ENCODE measurements at regions of chr10 and their contacts with region 1.

Region 1: GRCh38 chr10:49592726-49593563 is 17.2 kb upstream of the SLC18A3 start:
- DNase-seq: peak; percentile 82 to 87
- H3K4me3 ChIP-seq: no peak overlapping the region
- H3K4me3 Mint-ChIP-seq: no peak overlapping the region
- H3K27ac Mint-ChIP-seq: no peak overlapping the region
- H3K4me1 ChIP-seq: no peaks in the 10 kb centered on the region
- H3K4me1 Mint-ChIP-seq: no peaks in the 10 kb centered on the region
- H3K27me3 ChIP-seq: no peaks in the 10 kb centered on the region
- H3K27me3 Mint-ChIP-seq: no peaks in the 10 kb centered on the region
- CTCF ChIP-seq: peak; percentile 97 to 99

Region 2: DNA sequence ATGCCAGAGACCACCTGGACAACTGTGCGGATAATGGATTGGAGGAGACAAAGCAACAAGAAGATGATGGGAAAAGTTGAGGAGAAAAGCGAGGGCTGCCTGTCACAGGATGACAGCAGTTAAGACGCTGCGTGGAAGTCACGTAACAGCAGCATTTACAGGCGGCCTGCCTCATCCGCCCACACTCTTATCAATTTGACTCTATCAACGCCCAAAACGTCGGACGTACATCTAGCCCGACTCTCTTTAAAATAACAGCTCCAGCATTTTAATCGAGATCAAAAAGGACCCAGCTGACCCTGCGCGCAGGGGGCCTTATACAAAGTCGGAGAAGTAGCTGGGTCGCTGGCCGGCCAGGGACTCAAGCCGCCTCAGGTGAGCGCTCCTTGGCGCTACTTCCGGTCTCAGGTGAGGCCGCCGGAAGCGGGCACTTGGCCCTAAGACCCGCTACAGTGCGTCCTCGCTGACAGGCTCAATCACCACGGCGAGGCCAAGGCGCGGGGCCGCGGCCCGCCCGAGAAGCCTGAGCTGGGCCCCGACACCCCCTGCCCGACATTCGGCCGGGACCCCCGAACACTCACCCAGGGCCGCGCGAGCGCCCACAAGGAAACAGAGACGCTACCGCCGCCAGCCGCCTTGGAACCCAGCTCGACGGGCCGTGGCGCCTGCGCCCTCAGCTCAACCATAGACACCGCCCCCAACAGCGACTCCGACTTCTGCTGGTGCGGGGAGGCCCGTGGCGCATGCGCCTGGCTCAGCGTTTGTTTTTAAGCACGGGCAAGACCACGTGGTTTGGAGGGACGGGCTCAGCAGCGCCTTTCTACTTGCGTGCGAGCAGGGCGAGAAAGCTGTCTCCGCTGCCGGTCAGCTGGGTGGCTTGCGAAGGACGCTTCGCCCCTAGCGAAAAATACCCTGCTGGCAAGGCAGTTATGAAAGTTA is 54.3 kb before region 1 on chr10 and contains the start of gene ERCC6:
- CTCF ChIA-PET with region 1: interaction called, 4 read pairs
- POLR2A ChIA-PET with region 1: no interaction called
- intact Hi-C with region 1: loop called (anchors 2 kb)
- DNase-seq: peak; percentile 99
- H3K4me3 ChIP-seq: peak within 1 kb of the TSS; percentile 54
- H3K4me3 Mint-ChIP-seq: peak within 1 kb of the TSS; percentile 93
- H3K27ac Mint-ChIP-seq: peak within 1 kb of the TSS; percentile 96
- H3K4me1 ChIP-seq: no peaks in the 10 kb centered on the region
- H3K4me1 Mint-ChIP-seq: no peaks in the 10 kb centered on the region
- H3K27me3 ChIP-seq: no peaks in the 10 kb centered on the region
- H3K27me3 Mint-ChIP-seq: peaks cover 1% of the 10 kb centered on the region
- CTCF ChIP-seq: peak in 1 of 2 experiments; percentile 24
- total RNA-seq, gene ERCC6: 30.2 and 32.0 TPM in 2 replicates

Region 3: DNA sequence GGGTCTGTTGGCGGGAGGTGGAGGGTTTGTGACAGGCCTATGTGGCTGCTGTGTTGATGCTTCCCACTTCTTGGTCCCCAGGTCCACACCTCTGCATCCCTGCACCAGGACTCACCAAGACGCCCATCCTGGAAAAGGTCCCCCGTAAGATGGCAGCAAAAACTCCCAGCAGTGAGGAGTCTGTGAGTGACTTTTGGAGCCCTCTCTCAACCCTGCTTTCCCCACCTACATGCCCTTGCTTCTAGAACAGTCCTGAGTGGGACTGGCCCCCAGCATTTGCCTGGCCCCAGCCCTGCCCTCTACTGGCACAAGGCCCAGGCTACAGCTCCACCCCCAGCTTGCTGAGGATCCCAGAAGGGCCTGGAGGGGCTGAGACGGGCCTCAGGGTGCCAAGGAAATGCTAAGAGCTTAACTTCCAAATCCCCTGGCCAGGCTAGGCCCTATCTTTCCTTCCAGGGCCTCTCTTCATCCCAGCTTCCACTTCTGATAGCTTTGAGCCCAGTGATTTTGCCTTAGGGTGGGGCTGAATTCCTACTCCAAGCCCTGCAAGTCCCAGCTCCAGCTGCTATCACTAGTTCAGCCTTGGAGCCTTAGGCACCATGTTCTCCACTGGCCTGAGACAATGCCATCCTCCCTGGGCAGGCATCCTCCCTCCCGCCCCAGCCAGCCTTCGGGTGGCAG is 23.6 kb after region 1 on chr10:
- CTCF ChIA-PET with region 1: no interaction called
- POLR2A ChIA-PET with region 1: no interaction called
- intact Hi-C with region 1: loop called (anchors 2 kb)
- DNase-seq: peak in 1 of 2 experiments; percentile 40
- H3K4me3 ChIP-seq: no peak overlapping the region
- H3K4me3 Mint-ChIP-seq: no peak overlapping the region
- H3K27ac Mint-ChIP-seq: no peak overlapping the region
- H3K4me1 ChIP-seq: no peaks in the 10 kb centered on the region
- H3K4me1 Mint-ChIP-seq: no peaks in the 10 kb centered on the region
- H3K27me3 ChIP-seq: no peaks in the 10 kb centered on the region; the same call in 1 of the 2 replicates
- H3K27me3 Mint-ChIP-seq: peaks cover 28% of the 10 kb centered on the region
- CTCF ChIP-seq: peak in 1 of 2 experiments; percentile 22

Region 4: GRCh38 chr10:49761789-49762565 is 169.0 kb after region 1 on chr10 and contains the start of gene OGDHL:
- CTCF ChIA-PET with region 1: interaction called, 3 read pairs
- POLR2A ChIA-PET with region 1: no interaction called
- intact Hi-C with region 1: loop called (anchors 1 kb)
- DNase-seq: peak; percentile 90 to 96
- H3K4me3 ChIP-seq: peak within 1 kb of the TSS; percentile 84
- H3K4me3 Mint-ChIP-seq: peak within 1 kb of the TSS; percentile 75
- H3K27ac Mint-ChIP-seq: no peak within 1 kb of the TSS
- H3K4me1 ChIP-seq: 0 out of 2 replicates have a peak, but pooled peaks cover 7% of the 10 kb centered on the region
- H3K4me1 Mint-ChIP-seq: peaks cover 8% of the 10 kb centered on the region
- H3K27me3 ChIP-seq: no peaks in the 10 kb centered on the region
- H3K27me3 Mint-ChIP-seq: peaks cover 3% of the 10 kb centered on the region
- CTCF ChIP-seq: no peak
- total RNA-seq, gene OGDHL: 21.4 and 23.9 TPM in 2 replicates

Region 5: GRCh38 chr10:49783645-49784044 is 190.7 kb after region 1 on chr10:
- CTCF ChIA-PET with region 1: interaction called, 4 read pairs
- POLR2A ChIA-PET with region 1: no interaction called
- intact Hi-C with region 1: loop called (anchors 1 kb)
- DNase-seq: peak; percentile 62 to 63
- H3K4me3 ChIP-seq: no peak overlapping the region
- H3K4me3 Mint-ChIP-seq: no peak overlapping the region
- H3K27ac Mint-ChIP-seq: no peak overlapping the region
- H3K4me1 ChIP-seq: no peaks in the 10 kb centered on the region
- H3K4me1 Mint-ChIP-seq: no peaks in the 10 kb centered on the region
- H3K27me3 ChIP-seq: no peaks in the 10 kb centered on the region
- H3K27me3 Mint-ChIP-seq: peaks cover 6% of the 10 kb centered on the region
- CTCF ChIP-seq: peak; percentile 43 to 45

Region 6: DNA sequence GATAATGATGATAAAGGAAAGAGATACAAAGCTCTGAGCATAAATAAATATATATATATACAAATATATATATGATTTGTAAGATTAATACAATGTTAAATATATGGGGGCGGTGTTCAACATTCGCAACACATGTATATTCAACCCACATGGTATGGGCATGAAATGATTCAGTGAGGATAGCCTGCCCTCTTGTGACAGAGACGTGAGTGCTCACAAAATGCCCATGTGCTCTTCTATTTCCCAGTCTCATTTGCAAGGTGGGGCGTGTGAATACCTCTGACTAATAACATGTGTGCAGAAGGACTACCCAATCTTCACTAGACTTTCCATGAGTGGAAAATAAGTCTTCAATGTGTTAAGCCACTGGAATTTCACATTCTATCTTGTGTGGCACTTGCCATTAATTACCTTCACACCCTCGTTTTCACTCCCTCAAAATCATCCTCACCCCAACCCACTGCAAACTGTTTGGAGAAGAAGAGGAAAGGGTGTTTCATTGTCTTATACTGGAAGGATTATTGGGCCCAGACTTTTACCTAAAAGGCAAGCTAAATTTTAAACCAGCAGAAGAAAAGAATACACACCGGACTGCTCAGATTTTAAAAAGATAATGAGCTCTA is 631.5 kb after region 1 on chr10:
- CTCF ChIA-PET with region 1: no interaction called
- POLR2A ChIA-PET with region 1: interaction called, 4 read pairs
- intact Hi-C with region 1: loop called (anchors 1 kb)
- DNase-seq: peak; percentile 61 to 71
- H3K4me3 ChIP-seq: no peak overlapping the region
- H3K4me3 Mint-ChIP-seq: no peak overlapping the region
- H3K27ac Mint-ChIP-seq: no peak overlapping the region
- H3K4me1 ChIP-seq: no peaks in the 10 kb centered on the region
- H3K4me1 Mint-ChIP-seq: peaks cover 2% of the 10 kb centered on the region
- H3K27me3 ChIP-seq: no peaks in the 10 kb centered on the region
- H3K27me3 Mint-ChIP-seq: peaks cover 4% of the 10 kb centered on the region
- CTCF ChIP-seq: peak; percentile 85 to 91

Region 7: GRCh38 chr10:50275650-50276235 is 682.8 kb after region 1 on chr10:
- CTCF ChIA-PET with region 1: no interaction called
- POLR2A ChIA-PET with region 1: no interaction called
- intact Hi-C with region 1: loop called (anchors 1 kb)
- DNase-seq: peak; percentile 55 to 74
- H3K4me3 ChIP-seq: no peak overlapping the region
- H3K4me3 Mint-ChIP-seq: no peak overlapping the region
- H3K27ac Mint-ChIP-seq: no peak overlapping the region
- H3K4me1 ChIP-seq: no peaks in the 10 kb centered on the region
- H3K4me1 Mint-ChIP-seq: peaks cover 5% of the 10 kb centered on the region
- H3K27me3 ChIP-seq: peaks cover 4% of the 10 kb centered on the region; the same call in 1 of the 2 replicates
- H3K27me3 Mint-ChIP-seq: peaks cover 12% of the 10 kb centered on the region
- CTCF ChIP-seq: peak; percentile 78 to 93

Measured in Caco-2 (cell line).